ENCODE measurements at regions of chr17 and their contacts with region 1.

Region 1: DNA sequence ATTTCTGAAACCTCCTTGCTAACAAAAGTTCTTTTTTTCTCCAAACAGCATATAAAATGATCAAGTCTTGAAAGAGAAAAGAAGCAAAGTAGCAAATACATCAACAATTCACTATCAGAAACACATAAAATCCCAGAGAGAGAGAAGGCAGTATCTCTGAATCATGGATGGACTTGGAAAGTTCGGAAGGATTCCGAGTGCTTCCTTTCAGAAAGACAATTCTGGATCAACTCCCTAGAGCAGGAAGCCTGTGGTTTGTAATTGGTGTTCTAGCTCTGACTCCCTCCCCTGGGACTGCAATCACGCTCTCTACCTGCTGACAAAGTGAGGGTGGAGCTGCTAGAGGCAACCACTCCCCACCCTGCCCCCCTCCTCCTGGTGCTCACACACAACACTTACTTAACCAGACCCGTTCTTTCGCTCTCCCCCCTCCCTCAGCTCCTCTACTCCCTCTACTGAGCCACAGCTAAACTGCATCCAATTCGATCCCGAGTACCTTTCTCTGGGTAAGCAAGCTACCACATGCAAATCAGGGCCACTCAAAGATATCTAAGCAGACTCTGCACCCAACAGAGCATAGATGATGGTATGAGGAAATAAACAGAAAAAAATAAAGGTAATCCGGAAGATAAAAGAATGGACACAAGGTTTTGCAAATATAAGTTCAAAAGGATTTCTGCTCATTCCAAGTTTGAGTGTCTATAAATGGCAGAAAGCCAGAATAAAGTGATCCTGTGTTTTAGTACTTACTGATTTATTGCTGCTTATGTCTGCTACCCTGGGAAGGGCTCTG is at the start of gene RNF43:
- DNase-seq: peak; percentile 98 to 99
- H3K4me3 ChIP-seq: peak within 1 kb of the TSS; percentile 70
- H3K4me3 Mint-ChIP-seq: peak within 1 kb of the TSS; percentile 90
- H3K27ac Mint-ChIP-seq: peak within 1 kb of the TSS; percentile 93
- H3K4me1 ChIP-seq: peaks cover 13% of the 10 kb centered on the region
- H3K4me1 Mint-ChIP-seq: peaks cover 10% of the 10 kb centered on the region
- H3K27me3 ChIP-seq: no peaks in the 10 kb centered on the region
- H3K27me3 Mint-ChIP-seq: no peaks in the 10 kb centered on the region
- CTCF ChIP-seq: peak; percentile 88 to 92
- total RNA-seq, gene RNF43: 84.2 and 87.1 TPM in 2 replicates

Region 2: DNA sequence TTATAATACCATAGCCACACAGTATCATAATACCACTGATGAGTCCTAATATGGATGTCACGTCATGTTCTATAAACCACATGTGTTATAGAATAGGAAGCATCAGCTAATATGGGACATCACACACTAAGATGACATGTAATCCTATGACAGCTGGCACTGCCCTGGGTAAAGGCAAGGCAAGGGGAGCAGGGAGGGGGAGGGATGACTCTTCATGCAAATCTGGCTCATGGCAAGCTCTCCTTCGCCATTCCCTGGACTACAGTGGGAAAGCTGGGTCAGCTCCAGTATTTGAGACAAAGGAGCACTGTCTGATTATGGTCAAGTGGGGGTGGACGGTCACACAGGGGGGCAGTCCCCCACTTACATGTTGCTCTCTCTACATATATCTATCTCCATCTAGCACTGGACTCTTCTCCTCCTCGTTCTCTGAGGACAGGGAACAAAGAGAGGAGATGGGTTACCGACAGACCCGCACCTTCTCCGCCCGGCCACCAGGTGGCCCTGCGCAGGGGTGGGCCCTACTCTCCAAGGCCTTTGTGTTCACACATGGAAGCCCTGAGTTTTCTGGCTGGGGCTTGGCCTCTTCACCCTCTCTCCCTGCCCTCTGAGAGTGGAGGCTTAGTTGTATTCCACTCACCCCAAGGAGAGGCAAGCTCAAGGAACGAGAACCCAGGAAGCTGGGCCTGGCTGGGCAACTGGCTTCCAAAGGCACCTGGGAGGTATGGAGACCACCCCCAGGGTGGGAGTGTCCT is 113.3 kb before region 1 on chr17:
- CTCF ChIA-PET with region 1: interaction called, 10 read pairs
- POLR2A ChIA-PET with region 1: no interaction called
- intact Hi-C with region 1: no loop called
- DNase-seq: peak; percentile 69 to 76
- H3K4me3 ChIP-seq: no peak overlapping the region
- H3K4me3 Mint-ChIP-seq: no peak overlapping the region
- H3K27ac Mint-ChIP-seq: no peak overlapping the region
- H3K4me1 ChIP-seq: no peaks in the 10 kb centered on the region
- H3K4me1 Mint-ChIP-seq: peaks cover 5% of the 10 kb centered on the region
- H3K27me3 ChIP-seq: no peaks in the 10 kb centered on the region
- H3K27me3 Mint-ChIP-seq: no peaks in the 10 kb centered on the region
- CTCF ChIP-seq: peak; percentile 85 to 91

Region 3: DNA sequence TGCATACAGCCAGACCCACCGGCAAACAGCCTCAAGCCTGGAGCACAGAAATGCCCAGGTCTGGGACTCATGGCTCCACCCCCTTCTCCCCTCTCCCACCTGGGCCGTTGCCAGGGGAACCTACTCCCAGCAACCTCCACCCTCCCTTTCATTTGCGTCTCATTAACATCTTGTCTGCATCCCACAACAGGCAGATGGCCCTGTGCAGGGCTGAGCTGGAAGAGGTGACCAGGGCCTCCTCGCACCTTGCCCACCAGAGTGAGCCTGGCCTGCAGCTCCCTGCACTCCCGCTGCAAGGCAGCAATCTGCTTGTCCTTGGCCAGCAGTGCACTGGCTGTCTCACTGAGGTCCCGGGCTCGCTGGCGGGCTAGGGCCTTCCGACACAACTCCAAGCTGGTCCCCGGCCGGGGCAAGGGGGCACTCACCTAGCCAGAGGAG is 92.2 kb before region 1 on chr17:
- CTCF ChIA-PET with region 1: interaction called, 10 read pairs
- POLR2A ChIA-PET with region 1: interaction called, 5 read pairs
- intact Hi-C with region 1: no loop called
- DNase-seq: no peak
- H3K4me3 ChIP-seq: no peak overlapping the region
- H3K4me3 Mint-ChIP-seq: peak overlapping the region; percentile 15
- H3K27ac Mint-ChIP-seq: no peak overlapping the region
- H3K4me1 ChIP-seq: no peaks in the 10 kb centered on the region; the same call in 1 of the 2 replicates
- H3K4me1 Mint-ChIP-seq: peaks cover 14% of the 10 kb centered on the region
- H3K27me3 ChIP-seq: no peaks in the 10 kb centered on the region
- H3K27me3 Mint-ChIP-seq: no peaks in the 10 kb centered on the region
- CTCF ChIP-seq: no peak

Region 4: GRCh38 chr17:58352014-58352842 is 65.3 kb before region 1 on chr17 and contains the start of gene SUPT4H1:
- CTCF ChIA-PET with region 1: interaction called, 29 read pairs
- POLR2A ChIA-PET with region 1: interaction called, 17 read pairs
- intact Hi-C with region 1: loop called (anchors 1 kb)
- DNase-seq: peak; percentile 89 to 91
- H3K4me3 ChIP-seq: peak within 1 kb of the TSS; percentile 48
- H3K4me3 Mint-ChIP-seq: peak within 1 kb of the TSS; percentile 82
- H3K27ac Mint-ChIP-seq: peak within 1 kb of the TSS; percentile 81
- H3K4me1 ChIP-seq: no peaks in the 10 kb centered on the region
- H3K4me1 Mint-ChIP-seq: peaks cover 11% of the 10 kb centered on the region
- H3K27me3 ChIP-seq: no peaks in the 10 kb centered on the region
- H3K27me3 Mint-ChIP-seq: no peaks in the 10 kb centered on the region
- CTCF ChIP-seq: no peak
- total RNA-seq, gene SUPT4H1: 70.9 and 71.4 TPM in 2 replicates

Region 5: DNA sequence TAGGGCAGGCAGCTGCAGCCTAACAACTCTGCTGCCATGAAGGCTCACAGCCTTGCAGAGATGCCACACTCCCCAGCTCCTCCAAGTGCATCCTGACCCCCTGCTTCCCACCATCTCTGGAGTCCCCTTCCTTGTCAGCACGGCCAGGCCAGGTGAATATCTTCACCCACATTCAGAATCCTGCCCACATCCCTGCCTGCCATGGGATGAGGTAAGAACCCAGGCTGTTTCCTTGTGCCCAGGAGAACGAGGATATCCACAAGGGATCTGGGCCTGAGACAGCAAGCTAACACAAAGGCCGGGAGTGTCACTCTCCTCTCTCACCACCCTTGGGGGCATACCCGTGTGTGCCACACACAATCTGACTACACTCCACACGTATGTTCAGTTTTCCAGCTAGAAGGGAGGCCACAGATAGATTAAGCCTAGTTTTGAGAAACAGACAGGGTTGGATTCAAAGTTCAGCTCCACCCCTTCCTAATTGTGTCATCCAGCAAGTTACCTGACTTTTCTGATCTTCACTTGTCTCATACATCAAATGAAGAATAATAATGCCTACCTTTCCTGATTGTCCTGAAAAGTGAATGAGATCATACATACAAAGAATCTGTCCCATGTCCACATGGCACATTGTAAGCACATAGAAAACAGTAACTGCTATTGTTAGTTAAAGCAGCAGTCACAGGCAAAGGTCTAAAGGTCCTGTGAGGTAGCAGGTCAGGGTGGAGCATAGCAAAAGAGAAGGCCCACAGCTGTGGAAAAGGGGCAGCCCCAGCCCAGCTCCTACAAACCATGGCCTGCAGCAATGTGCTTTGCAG is 48.1 kb before region 1 on chr17:
- CTCF ChIA-PET with region 1: interaction called, 34 read pairs
- POLR2A ChIA-PET with region 1: interaction called, 28 read pairs
- intact Hi-C with region 1: loop called (anchors 1 kb)
- DNase-seq: peak; percentile 71 to 77
- H3K4me3 ChIP-seq: no peak overlapping the region
- H3K4me3 Mint-ChIP-seq: peak overlapping the region; percentile 43
- H3K27ac Mint-ChIP-seq: peak overlapping the region; percentile 87
- H3K4me1 ChIP-seq: peaks cover 88% of the 10 kb centered on the region
- H3K4me1 Mint-ChIP-seq: peaks cover 74% of the 10 kb centered on the region
- H3K27me3 ChIP-seq: no peaks in the 10 kb centered on the region
- H3K27me3 Mint-ChIP-seq: no peaks in the 10 kb centered on the region
- CTCF ChIP-seq: no peak

Region 6: GRCh38 chr17:58391302-58391984 is 26.1 kb before region 1 on chr17:
- CTCF ChIA-PET with region 1: interaction called, 3 read pairs
- POLR2A ChIA-PET with region 1: interaction called, 5 read pairs
- intact Hi-C with region 1: loop called (anchors 1 kb)
- DNase-seq: peak; percentile 93 to 96
- H3K4me3 ChIP-seq: no peak overlapping the region
- H3K4me3 Mint-ChIP-seq: peak overlapping the region; percentile 62
- H3K27ac Mint-ChIP-seq: peak overlapping the region; percentile 90
- H3K4me1 ChIP-seq: peaks cover 96% of the 10 kb centered on the region
- H3K4me1 Mint-ChIP-seq: peaks cover 68% of the 10 kb centered on the region
- H3K27me3 ChIP-seq: no peaks in the 10 kb centered on the region
- H3K27me3 Mint-ChIP-seq: no peaks in the 10 kb centered on the region
- CTCF ChIP-seq: no peak

Region 7: GRCh38 chr17:58432806-58433572 is 15.5 kb after region 1 on chr17:
- CTCF ChIA-PET with region 1: interaction called, 6 read pairs
- POLR2A ChIA-PET with region 1: interaction called, 10 read pairs
- intact Hi-C with region 1: no loop called
- DNase-seq: no peak
- H3K4me3 ChIP-seq: no peak overlapping the region
- H3K4me3 Mint-ChIP-seq: no peak overlapping the region
- H3K27ac Mint-ChIP-seq: no peak overlapping the region
- H3K4me1 ChIP-seq: no peaks in the 10 kb centered on the region
- H3K4me1 Mint-ChIP-seq: no peaks in the 10 kb centered on the region
- H3K27me3 ChIP-seq: no peaks in the 10 kb centered on the region
- H3K27me3 Mint-ChIP-seq: no peaks in the 10 kb centered on the region
- CTCF ChIP-seq: peak in 1 of 2 experiments; percentile 24

Region 8: GRCh38 chr17:58446079-58446478 is 28.6 kb after region 1 on chr17:
- CTCF ChIA-PET with region 1: no interaction called
- POLR2A ChIA-PET with region 1: no interaction called
- intact Hi-C with region 1: no loop called
- DNase-seq: no peak
- H3K4me3 ChIP-seq: no peak overlapping the region
- H3K4me3 Mint-ChIP-seq: no peak overlapping the region
- H3K27ac Mint-ChIP-seq: no peak overlapping the region
- H3K4me1 ChIP-seq: no peaks in the 10 kb centered on the region
- H3K4me1 Mint-ChIP-seq: peaks cover 8% of the 10 kb centered on the region
- H3K27me3 ChIP-seq: no peaks in the 10 kb centered on the region
- H3K27me3 Mint-ChIP-seq: no peaks in the 10 kb centered on the region
- CTCF ChIP-seq: no peak

Measured in Caco-2 (cell line).